Activated CD4-positive, alpha-beta T cell treated with anti-CD3 and anti-CD28 coated beads, Interleukin-2, amount 10 ng/mL, durations not matched to agents 7 days and 5 days (primary cell): ENCODE measurements at regions of chr19 and their contacts with region 1.

Region 1: DNA sequence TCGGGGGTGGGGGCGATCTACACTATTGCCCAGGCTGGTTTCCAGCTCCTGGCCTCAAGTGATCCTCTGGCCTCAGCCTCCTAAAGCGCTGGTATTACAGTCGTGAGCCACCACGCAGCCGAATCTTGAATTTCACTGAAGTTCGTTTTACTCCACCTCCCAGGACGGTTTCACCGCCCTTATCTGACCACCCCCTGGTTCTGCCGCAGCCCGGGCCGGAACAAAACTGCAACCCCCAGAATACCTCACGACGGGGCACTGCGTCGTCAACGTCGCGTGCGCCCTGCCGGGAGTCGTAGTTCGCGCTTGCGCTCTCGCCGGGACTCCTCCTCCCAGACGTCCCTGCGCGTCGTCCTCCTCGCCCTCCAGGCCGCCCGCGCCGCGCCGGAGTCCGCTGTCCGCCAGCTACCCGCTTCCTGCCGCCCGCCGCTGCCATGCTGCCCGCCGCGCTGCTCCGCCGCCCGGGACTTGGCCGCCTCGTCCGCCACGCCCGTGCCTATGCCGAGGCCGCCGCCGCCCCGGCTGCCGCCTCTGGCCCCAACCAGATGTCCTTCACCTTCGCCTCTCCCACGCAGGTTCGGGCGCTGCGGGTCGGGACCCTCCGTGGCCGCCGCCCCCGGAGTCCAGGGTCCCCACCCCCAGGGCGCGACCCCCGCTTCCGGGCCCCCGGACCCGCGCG is at the start of gene ATP5F1D:
- DNase-seq: peak; percentile 90
- H3K4me3 Mint-ChIP-seq: peak within 1 kb of the TSS; percentile 86
- H3K27ac Mint-ChIP-seq: peak within 1 kb of the TSS; percentile 92
- H3K4me1 Mint-ChIP-seq: peaks cover 45% of the 10 kb centered on the region
- H3K27me3 Mint-ChIP-seq: peaks cover 20% of the 10 kb centered on the region
- total RNA-seq, gene ATP5F1D: 151 to 166 TPM

Region 2: GRCh38 chr19:1113033-1113985 is 128.2 kb before region 1 on chr19:
- CTCF ChIA-PET with region 1: interaction called, 10 read pairs
- POLR2A ChIA-PET with region 1: no interaction called
- DNase-seq: peak; percentile 87
- H3K4me3 Mint-ChIP-seq: no peak overlapping the region
- H3K27ac Mint-ChIP-seq: no peak overlapping the region
- H3K4me1 Mint-ChIP-seq: peaks cover 3% of the 10 kb centered on the region
- H3K27me3 Mint-ChIP-seq: no peaks in the 10 kb centered on the region

Region 3: GRCh38 chr19:1213391-1214286 is 27.9 kb before region 1 on chr19:
- CTCF ChIA-PET with region 1: interaction called, 11 read pairs
- POLR2A ChIA-PET with region 1: interaction called, 3 read pairs
- DNase-seq: peak; percentile 63
- H3K4me3 Mint-ChIP-seq: peak overlapping the region; percentile 65
- H3K27ac Mint-ChIP-seq: peak overlapping the region; percentile 96
- H3K4me1 Mint-ChIP-seq: peaks cover 41% of the 10 kb centered on the region
- H3K27me3 Mint-ChIP-seq: no peaks in the 10 kb centered on the region

Region 4: DNA sequence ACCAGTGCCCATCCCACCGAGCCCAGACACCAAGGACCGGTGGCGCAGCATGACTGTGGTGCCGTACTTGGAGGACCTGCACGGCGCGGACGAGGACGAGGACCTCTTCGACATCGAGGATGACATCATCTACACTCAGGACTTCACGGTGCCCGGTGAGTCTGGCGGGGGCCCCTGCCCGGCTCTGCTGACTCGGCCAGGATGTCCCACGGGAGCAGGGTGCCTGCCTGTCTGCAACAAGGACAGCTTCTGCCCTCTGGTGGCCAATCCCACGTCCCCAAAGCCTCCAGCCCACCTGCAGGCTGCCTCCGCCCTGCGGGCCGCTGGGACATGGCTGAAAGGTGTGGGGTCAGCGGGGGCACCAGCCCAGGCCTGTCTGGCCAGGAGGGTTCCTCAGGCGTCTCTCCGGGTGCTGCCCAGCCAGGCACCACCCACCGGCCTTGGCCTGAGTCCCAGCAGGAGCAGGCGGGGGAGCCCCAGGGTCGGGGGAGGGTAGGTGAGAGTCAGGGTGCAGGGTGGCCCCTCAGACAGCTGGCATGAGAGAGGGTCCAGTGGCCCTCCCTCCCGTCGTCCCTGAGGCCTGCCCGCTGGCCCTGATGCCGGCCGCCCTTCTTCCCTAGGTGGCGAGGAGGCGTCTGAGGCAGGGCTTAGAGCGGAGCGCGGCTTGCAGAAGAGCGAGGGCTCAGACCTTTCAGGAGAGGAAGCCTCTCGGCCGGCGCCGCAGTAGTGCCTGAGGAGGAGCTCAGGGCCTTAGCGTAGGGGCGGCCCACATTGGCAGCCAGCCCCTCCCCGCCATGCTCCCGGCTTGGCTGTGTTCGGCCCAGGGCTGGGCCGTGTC is 18.3 kb before region 1 on chr19:
- CTCF ChIA-PET with region 1: interaction called, 11 read pairs
- POLR2A ChIA-PET with region 1: no interaction called
- DNase-seq: peak; percentile 41
- H3K4me3 Mint-ChIP-seq: no peak overlapping the region
- H3K27ac Mint-ChIP-seq: no peak overlapping the region
- H3K4me1 Mint-ChIP-seq: no peaks in the 10 kb centered on the region
- H3K27me3 Mint-ChIP-seq: no peaks in the 10 kb centered on the region

Region 5: DNA sequence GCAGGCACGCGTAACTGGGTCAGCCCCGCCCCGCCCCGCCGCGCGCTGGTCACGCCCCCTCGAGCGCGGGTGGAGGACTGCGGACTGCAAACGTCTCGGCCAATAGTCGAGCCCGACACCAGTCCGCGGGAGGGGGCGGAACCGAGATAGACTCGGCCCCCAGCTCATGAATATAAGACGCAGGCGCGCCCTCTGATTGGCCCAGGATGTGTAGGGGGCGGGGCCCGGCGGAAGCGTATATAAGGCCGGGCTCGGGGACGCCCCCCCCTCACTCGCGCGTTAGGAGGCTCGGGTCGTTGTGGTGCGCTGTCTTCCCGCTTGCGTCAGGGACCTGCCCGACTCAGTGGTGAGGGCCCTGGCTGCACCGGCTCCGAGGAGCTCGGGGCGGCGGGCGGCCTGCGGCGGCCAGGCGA is 27.5 kb after region 1 on chr19 and contains the start of gene CIRBP:
- CTCF ChIA-PET with region 1: interaction called, 299 read pairs
- POLR2A ChIA-PET with region 1: interaction called, 45 read pairs
- DNase-seq: peak; percentile 99
- H3K4me3 Mint-ChIP-seq: peak within 1 kb of the TSS; percentile 88
- H3K27ac Mint-ChIP-seq: peak within 1 kb of the TSS; percentile 90
- H3K4me1 Mint-ChIP-seq: peaks cover 67% of the 10 kb centered on the region
- H3K27me3 Mint-ChIP-seq: peaks cover 2% of the 10 kb centered on the region
- total RNA-seq, gene CIRBP: 169 to 224 TPM

Region 6: DNA sequence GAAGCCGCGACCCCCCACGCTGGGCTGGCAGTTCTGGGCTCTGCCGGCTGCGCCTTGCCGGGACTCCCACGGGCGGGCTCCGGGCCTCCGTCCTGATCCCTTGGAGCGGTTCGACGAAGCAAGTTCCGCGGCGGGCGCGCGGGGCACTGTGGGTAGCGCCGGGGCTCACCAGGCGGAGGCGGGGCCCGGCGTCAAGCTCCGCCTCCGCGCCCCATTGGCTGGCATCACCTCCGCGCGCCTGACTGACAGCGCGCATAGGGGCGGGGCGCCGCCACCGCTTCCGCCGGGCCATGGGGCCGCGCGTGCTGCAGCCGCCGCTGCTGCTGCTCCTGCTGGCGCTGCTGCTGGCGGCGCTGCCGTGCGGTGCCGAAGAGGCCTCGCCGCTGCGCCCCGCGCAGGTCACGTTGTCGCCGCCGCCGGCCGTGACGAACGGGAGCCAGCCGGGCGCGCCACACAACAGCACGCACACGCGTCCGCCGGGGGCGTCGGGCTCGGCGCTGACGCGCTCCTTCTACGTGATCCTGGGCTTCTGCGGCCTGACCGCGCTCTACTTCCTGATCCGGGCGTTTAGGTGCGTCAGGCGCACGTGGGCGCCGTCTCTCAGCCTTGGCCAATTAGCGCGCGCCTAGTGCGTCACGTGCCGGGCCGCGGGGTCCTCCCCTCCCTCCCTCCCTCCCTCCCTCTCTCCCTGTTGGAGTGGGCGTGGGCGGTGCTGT is 33.9 kb after region 1 on chr19 and contains the start of gene FAM174C:
- CTCF ChIA-PET with region 1: interaction called, 34 read pairs
- POLR2A ChIA-PET with region 1: interaction called, 4 read pairs
- DNase-seq: peak; percentile 96
- H3K4me3 Mint-ChIP-seq: peak within 1 kb of the TSS; percentile 88
- H3K27ac Mint-ChIP-seq: peak within 1 kb of the TSS; percentile 97
- H3K4me1 Mint-ChIP-seq: peaks cover 56% of the 10 kb centered on the region
- H3K27me3 Mint-ChIP-seq: no peaks in the 10 kb centered on the region
- total RNA-seq, gene FAM174C: 47.8 to 51.5 TPM